Lower leg skin (tissue), 4 donors: ENCODE measurements at regions of chr2 and their contacts with region 1.

Region 1: DNA sequence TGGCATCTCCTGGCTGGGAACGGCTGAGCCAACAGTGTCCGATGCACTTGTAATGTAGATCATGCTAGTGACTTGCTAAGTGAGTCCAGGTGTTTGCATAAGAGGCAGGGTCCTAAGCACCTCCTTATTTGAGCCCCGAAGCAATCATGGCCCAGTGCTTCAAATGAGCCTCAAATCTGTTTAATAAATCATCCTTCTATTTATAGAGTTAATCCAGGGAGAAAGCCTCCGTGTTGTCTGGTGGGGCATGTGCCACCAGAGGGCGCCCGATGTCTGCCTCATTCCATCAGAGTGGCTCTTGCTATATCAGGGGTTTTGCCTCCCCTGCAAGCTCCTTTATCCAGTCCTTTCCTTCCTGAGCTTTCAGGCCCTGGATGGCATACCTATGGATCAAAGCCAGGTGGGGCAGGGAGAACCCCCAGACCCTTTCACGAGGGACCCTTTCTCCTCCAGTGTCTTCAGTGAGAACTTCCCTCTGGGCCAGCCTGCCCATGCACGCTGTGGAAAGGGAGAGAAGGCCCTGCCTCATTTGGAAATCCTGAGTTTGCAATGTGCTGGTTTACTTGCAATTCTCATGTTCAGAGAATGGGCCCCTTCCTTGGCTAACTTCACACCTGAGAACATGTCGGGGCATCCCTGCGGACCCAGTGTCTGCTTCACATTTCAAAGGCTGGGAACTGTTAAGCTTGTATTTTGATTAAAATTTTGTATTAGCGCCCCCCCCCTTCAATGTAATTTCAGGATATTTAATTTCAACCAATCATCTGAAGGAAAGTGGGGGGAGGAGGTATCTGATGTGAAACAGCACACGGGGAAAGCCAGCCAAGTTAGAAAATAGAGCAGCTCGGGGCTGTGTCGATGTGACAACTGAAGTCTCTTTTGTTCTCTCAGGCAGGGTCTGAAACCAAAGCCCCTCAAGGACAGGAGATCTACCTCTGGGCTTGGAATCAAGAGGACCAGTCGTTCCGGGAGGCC is 39.7 kb downstream of the RDH14 start:
- DNase-seq: peak; percentile 81 to 98
- H3K4me3 ChIP-seq: no peak overlapping the region
- CTCF ChIP-seq: peak in 1 of 3 donors; percentile 77
- POLR2A ChIP-seq: no peak

Region 2: GRCh38 chr2:18749912-18750526 is 229.3 kb after region 1 on chr2:
- intact Hi-C with region 1: loop called (anchors 10 kb)
- DNase-seq: peak in 1 of 2 donors; percentile 53
- H3K4me3 ChIP-seq: no peak overlapping the region
- CTCF ChIP-seq: no peak
- POLR2A ChIP-seq: no peak

Region 3: DNA sequence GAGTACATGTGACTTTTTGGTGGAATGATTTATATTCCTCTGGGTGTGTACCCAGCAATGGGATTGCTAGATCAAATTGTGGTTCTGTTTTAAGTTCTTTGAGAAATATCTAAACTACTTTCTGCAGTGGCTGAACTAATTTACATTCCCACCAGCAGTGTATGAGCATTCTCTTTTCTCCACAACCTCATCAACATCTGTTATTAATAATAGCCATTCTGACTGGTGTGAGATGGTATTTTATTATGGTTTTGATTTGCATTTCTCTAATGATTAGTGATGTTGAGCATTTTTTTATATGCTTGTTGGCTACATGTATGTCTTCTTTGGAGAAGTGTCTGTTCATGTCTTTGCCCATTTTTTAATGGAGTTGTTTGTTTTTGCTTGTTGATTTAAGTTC is 336.0 kb after region 1 on chr2:
- intact Hi-C with region 1: no loop called
- DNase-seq: no peak
- H3K4me3 ChIP-seq: no peak overlapping the region
- CTCF ChIP-seq: no peak
- POLR2A ChIP-seq: no peak

Region 4: GRCh38 chr2:19362755-19363473 is 842.2 kb after region 1 on chr2:
- intact Hi-C with region 1: loop called (anchors 10 kb)
- DNase-seq: peak; percentile 73 to 96
- H3K4me3 ChIP-seq: peak overlapping the region; percentile 8
- CTCF ChIP-seq: peak in 1 of 3 donors; percentile 59
- POLR2A ChIP-seq: no peak

Region 5: DNA sequence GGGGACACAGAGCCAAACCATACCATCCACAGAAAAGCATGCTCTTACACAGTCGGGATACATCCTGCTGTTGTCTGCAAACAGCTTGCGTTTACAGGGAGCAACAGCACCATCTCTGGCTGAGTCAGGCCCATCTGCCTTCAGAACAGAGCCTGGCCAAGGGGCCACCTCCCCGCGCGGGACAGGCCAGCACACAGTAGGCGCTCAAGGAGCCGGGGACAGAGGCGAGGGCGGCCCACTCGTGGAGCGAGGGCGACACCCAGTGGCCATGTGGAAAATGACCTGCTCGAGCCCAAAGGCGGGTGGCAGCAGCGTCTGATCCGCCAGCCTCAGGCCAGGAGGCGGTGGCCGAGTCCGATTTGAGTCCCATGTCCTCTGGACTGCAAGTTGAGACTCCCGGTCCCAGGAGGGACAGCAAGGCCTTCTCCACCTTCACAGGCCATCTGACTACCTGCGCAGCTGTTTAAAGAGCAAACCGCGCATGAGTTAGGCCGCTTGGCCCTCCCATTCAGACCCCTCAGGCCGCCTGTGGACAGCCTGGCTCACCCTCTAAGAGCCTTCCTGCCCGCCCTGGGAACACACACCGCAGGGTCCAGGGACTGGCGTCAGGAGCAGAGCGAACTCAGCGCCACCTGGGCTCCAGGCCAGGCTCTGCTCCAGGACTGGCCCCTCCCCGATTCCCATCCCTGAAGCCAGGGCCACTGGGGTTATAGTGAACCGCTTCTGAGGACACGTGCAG is 1342.7 kb after region 1 on chr2:
- intact Hi-C with region 1: loop called (anchors 5 kb)
- DNase-seq: peak; percentile 53 to 95
- H3K4me3 ChIP-seq: no peak overlapping the region
- CTCF ChIP-seq: peak in 2 of 3 donors; percentile 75 to 90
- POLR2A ChIP-seq: no peak